CD8-positive, alpha-beta T cell (primary cell): ENCODE measurements at regions of chrX and their contacts with region 1.

Region 1: GRCh38 chrX:136147315-136147901 is at the start of gene FHL1:
- DNase-seq: peak in 8 of 9 experiments; percentile 22 to 68 (median 45)
- ATAC-seq: peak; percentile 75
- H3K4me3 ChIP-seq: peak within 1 kb of the TSS; percentile 57
- H3K4me3 Mint-ChIP-seq: peak within 1 kb of the TSS; percentile 86
- H3K27ac ChIP-seq: peak within 1 kb of the TSS in 1 of 2 experiments; percentile 48
- H3K27ac Mint-ChIP-seq: peak within 1 kb of the TSS; percentile 76
- H3K4me1 ChIP-seq: peaks cover 18% of the 10 kb centered on the region
- H3K4me1 Mint-ChIP-seq: peaks cover 38% of the 10 kb centered on the region
- H3K27me3 ChIP-seq: no peaks in the 10 kb centered on the region
- H3K27me3 Mint-ChIP-seq: no peaks in the 10 kb centered on the region
- CTCF ChIP-seq: no peak
- total RNA-seq, gene FHL1: 10.7 to 11.8 TPM

Region 2: DNA sequence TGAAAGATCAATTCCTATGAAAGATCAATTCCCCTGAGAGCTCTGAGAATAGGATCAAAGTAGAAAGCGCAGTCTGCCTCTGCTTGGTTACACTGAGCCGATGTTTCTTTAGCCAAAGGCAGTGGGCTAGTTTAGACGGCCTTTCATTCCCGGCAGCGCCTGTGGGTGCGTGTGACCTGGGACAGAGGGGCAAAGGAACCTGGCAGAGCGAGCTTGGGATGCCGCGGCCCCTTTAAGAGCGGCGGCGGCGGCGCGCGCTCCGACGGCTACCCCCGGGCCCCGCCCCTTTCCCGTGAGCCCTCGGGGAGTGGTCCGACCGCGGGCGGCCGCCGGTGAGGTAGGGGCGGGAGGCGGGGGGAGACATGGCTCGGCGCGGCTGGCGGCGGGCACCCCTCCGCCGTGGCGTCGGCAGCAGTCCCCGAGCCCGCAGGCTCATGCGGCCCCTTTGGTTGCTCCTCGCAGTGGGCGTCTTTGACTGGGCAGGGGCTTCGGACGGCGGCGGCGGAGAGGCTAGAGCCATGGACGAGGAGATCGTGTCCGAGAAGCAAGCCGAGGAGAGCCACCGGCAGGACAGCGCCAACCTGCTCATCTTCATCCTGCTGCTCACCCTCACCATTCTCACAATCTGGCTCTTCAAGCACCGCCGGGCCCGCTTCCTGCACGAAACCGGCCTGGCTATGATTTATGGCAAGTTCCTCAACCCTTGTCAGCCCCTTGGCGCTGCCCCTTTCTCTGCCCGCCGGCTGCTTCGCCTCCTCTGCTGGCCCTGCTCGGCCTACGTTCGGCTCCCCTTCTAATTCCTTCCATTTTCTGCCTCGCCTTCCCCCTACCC is 162.1 kb before region 1 on chrX and contains the start of gene SLC9A6:
- CTCF ChIA-PET with region 1: no interaction called
- POLR2A ChIA-PET with region 1: no interaction called
- intact Hi-C with region 1: loop called (anchors 5 kb)
- DNase-seq: peak in 8 of 9 experiments; percentile 46 to 80 (median 68)
- ATAC-seq: peak; percentile 88
- H3K4me3 ChIP-seq: peak within 1 kb of the TSS; percentile 71 to 83
- H3K4me3 Mint-ChIP-seq: peak within 1 kb of the TSS; percentile 91
- H3K27ac ChIP-seq: peak within 1 kb of the TSS; percentile 64 to 71
- H3K27ac Mint-ChIP-seq: peak within 1 kb of the TSS; percentile 93
- H3K4me1 ChIP-seq: peaks cover 26% of the 10 kb centered on the region
- H3K4me1 Mint-ChIP-seq: peaks cover 64% of the 10 kb centered on the region
- H3K27me3 ChIP-seq: no peaks in the 10 kb centered on the region
- H3K27me3 Mint-ChIP-seq: no peaks in the 10 kb centered on the region
- CTCF ChIP-seq: no peak
- total RNA-seq, gene SLC9A6: 15.9 to 18.7 TPM

Region 3: GRCh38 chrX:136034668-136035067 is 112.7 kb before region 1 on chrX:
- CTCF ChIA-PET with region 1: no interaction called
- POLR2A ChIA-PET with region 1: no interaction called
- intact Hi-C with region 1: no loop called
- DNase-seq: no peak
- ATAC-seq: no peak
- H3K4me3 ChIP-seq: no peak overlapping the region
- H3K4me3 Mint-ChIP-seq: no peak overlapping the region
- H3K27ac ChIP-seq: no peak overlapping the region
- H3K27ac Mint-ChIP-seq: no peak overlapping the region
- H3K4me1 ChIP-seq: no peaks in the 10 kb centered on the region
- H3K4me1 Mint-ChIP-seq: no peaks in the 10 kb centered on the region
- H3K27me3 ChIP-seq: no peaks in the 10 kb centered on the region
- H3K27me3 Mint-ChIP-seq: no peaks in the 10 kb centered on the region
- CTCF ChIP-seq: no peak

Region 4: DNA sequence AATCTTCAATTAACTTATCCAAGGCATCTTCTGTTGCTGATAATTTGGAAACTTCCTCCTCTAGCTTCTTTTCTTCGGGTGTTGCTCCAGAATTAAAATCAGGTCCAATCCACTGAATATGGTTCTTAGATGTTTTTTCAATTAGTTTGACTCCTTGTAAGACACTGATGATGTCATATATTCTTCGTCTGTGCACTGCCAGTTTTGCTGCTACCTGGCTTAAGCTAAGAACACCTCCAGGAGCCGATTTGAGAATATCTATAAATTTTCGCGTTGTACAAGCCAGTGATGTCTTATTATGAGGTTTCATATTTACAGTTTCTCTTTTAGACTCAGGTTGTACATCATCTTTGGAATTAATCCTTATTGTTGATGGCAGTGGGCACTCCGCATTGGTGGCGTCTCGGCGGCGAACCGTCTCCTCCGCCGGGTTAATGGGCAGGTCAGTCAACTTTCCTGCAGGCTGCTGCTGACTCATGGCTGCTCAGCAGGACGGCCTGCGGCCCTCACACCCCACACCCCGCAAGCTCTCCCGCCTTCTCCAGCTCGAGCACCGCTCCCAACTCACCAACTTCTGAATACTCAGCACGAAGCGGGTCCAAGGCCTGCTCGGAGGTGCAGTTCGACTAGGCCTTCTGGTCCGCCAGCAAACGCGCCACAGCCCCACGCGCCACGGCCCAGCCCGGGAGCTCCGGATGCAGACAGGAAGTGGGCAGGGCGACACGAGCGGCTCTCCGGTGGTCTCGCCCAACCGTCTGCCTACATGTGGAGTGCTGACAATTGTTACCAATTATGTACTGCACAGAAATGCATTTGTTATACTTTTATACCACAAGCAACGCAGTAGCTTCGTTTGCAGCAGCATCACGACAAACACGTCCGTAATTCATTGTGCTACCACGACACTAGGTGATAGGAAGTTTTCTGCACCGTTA is 49.3 kb before region 1 on chrX:
- CTCF ChIA-PET with region 1: no interaction called
- POLR2A ChIA-PET with region 1: no interaction called
- intact Hi-C with region 1: no loop called
- DNase-seq: no peak
- ATAC-seq: no peak
- H3K4me3 ChIP-seq: no peak overlapping the region
- H3K4me3 Mint-ChIP-seq: no peak overlapping the region
- H3K27ac ChIP-seq: no peak overlapping the region
- H3K27ac Mint-ChIP-seq: no peak overlapping the region
- H3K4me1 ChIP-seq: no peaks in the 10 kb centered on the region
- H3K4me1 Mint-ChIP-seq: no peaks in the 10 kb centered on the region
- H3K27me3 ChIP-seq: no peaks in the 10 kb centered on the region
- H3K27me3 Mint-ChIP-seq: no peaks in the 10 kb centered on the region
- CTCF ChIP-seq: no peak

Region 5: GRCh38 chrX:136130931-136131833 is 16.2 kb before region 1 on chrX:
- CTCF ChIA-PET with region 1: no interaction called
- POLR2A ChIA-PET with region 1: no interaction called
- intact Hi-C with region 1: no loop called
- DNase-seq: no peak
- ATAC-seq: no peak
- H3K4me3 ChIP-seq: no peak overlapping the region
- H3K4me3 Mint-ChIP-seq: no peak overlapping the region
- H3K27ac ChIP-seq: no peak overlapping the region
- H3K27ac Mint-ChIP-seq: no peak overlapping the region
- H3K4me1 ChIP-seq: no peaks in the 10 kb centered on the region
- H3K4me1 Mint-ChIP-seq: no peaks in the 10 kb centered on the region
- H3K27me3 ChIP-seq: no peaks in the 10 kb centered on the region
- H3K27me3 Mint-ChIP-seq: no peaks in the 10 kb centered on the region
- CTCF ChIP-seq: no peak